Panc1 (cell line): ENCODE measurements at regions of chr2 and their contacts with region 1.

Region 1: DNA sequence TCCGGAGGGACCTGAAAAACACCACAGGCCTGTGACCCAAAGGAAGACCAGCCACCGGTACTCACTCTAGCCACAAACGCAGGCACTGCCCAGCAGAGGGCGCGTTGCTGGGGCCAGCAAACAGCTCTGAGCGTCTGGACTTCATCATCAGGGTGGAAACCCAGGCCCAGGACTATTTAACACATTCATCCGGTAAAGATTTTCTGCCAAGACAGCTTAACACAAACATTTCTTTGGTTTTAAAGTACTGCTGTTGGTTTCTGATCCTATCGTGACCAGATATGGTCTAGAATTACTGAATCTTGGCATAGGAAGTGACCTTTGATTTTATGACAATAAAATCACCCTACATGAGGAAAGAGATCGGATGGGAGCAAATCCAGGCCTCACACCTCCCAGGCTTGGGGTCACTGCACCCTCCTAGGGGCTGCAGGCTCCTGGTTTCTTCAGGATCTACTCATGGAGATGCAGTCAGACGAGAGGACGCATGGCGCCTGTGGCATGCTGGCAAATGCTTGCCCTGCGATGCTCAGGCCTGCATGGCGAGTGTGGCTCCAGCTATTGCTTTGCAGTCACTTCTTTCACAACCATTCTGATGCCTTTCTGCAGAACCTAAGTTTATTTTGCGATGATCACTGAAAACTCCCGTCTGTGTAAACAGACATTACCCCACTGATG is 130.4 kb downstream of the COL4A4 start:
- DNase-seq: peak; percentile 13
- ATAC-seq: peak; percentile 72
- H3K4me3 ChIP-seq: no peak overlapping the region
- H3K27ac ChIP-seq: no peak overlapping the region
- H3K4me1 ChIP-seq: no peaks in the 10 kb centered on the region
- H3K27me3 ChIP-seq: no peaks in the 10 kb centered on the region
- CTCF ChIP-seq: peak; percentile 90

Region 2: GRCh38 chr2:227106845-227107759 is 73.5 kb after region 1 on chr2:
- CTCF ChIA-PET with region 1: no interaction called
- POLR2A ChIA-PET with region 1: no interaction called
- in situ Hi-C with region 1: no loop called
- intact Hi-C with region 1: loop called (anchors 1 kb)
- DNase-seq: peak; percentile 63
- ATAC-seq: peak; percentile 98
- H3K4me3 ChIP-seq: no peak overlapping the region
- H3K27ac ChIP-seq: no peak overlapping the region
- H3K4me1 ChIP-seq: no peaks in the 10 kb centered on the region
- H3K27me3 ChIP-seq: no peaks in the 10 kb centered on the region; the same call in 1 of the 2 replicates
- CTCF ChIP-seq: peak; percentile 94

Region 3: GRCh38 chr2:227406177-227407031 is 372.8 kb after region 1 on chr2:
- CTCF ChIA-PET with region 1: no interaction called
- POLR2A ChIA-PET with region 1: no interaction called
- in situ Hi-C with region 1: no loop called
- intact Hi-C with region 1: no loop called
- DNase-seq: peak; percentile 86
- ATAC-seq: peak; percentile 95
- H3K4me3 ChIP-seq: peak overlapping the region in 1 of 2 experiments; percentile 1; a peak in 1 of 4 replicates
- H3K27ac ChIP-seq: peak overlapping the region; percentile 39
- H3K4me1 ChIP-seq: peaks cover 12% of the 10 kb centered on the region
- H3K27me3 ChIP-seq: no peaks in the 10 kb centered on the region
- CTCF ChIP-seq: peak; percentile 86